ENCODE measurements at regions of chr18 and their contacts with region 1.

Region 1: DNA sequence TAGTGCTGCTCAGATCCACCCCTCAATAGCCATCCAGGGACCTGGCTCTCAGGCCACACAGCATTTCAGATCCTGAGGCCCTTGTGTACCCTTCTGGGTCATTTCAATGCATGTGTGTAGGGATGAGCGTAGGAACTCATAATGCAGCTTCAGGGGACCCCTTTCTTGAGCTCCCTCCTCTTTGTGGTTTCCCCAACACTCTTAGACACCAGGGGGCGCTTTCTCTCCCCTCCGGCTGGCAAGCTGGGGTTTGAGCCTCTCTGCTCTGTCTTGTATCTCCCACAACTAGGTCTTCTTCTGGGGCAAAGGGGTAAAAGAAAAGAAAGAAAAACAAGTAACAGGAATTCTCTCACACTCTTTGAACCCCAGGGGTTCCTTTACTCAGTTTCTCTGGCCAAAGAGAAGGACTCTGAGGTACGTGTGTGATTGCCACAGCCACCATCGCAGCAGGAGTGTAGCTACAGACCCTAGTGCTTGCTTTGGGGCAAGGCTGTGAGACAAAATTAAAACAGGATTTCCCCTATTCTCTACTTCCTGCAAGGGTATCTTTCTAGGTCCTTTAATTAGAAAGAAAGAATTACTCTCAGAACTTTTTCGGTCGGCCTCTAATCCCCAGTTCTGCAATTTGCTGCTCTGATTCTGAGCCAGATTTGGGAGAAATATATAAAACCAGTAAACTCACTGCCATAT is 38.0 kb downstream of the CABYR start:
- DNase-seq: peak; percentile 12 to 33 (median 23)
- H3K4me3 ChIP-seq: no peak overlapping the region
- H3K4me3 Mint-ChIP-seq: no peak overlapping the region
- H3K27ac ChIP-seq: no peak overlapping the region
- H3K27ac Mint-ChIP-seq: peak overlapping the region in 1 of 7 donors; percentile 54
- H3K4me1 ChIP-seq: no peaks in the 10 kb centered on the region
- H3K4me1 Mint-ChIP-seq: peaks cover 6% of the 10 kb centered on the region
- H3K27me3 ChIP-seq: no peaks in the 10 kb centered on the region
- H3K27me3 Mint-ChIP-seq: no peaks in the 10 kb centered on the region
- CTCF ChIP-seq: peak; percentile 82

Region 2: DNA sequence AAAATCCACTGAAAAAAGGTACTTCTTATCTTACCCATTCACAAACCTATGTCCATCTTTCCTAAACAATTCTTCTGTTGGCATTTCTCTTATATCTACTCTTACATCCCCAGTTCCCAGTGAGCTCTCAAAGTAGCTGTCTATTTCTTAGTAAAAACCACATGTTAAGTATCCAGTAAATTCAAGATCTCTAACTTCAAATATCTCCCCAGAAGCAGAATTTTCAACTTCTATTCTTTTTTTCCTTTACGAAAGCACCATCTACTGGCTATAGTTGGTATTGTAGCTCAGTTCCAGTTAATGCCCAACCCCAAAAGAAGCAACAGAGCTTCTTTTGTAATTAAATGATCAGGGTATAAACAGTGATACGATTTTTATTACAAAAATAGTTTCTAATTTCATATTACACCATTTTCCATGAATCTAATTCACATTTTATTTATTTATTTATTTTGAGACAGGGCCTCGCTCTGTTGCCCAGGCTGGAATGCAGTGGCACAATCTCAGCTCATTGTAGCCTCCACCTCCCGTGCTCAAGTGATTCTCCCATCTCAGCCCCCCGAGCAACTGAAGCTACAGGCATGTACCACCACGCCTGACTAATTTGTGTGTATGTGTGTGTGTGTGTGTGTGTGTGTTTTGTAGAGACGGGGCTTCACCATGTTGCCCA is 312.1 kb after region 1 on chr18:
- intact Hi-C with region 1: loop called (anchors 5 to 10 kb)
- DNase-seq: peak in 2 of 3 donors; percentile 25 to 46
- H3K4me3 ChIP-seq: no peak overlapping the region
- H3K4me3 Mint-ChIP-seq: no peak overlapping the region
- H3K27ac ChIP-seq: no peak overlapping the region
- H3K27ac Mint-ChIP-seq: no peak overlapping the region
- H3K4me1 ChIP-seq: no peaks in the 10 kb centered on the region
- H3K4me1 Mint-ChIP-seq: peaks cover 21% of the 10 kb centered on the region
- H3K27me3 ChIP-seq: no peaks in the 10 kb centered on the region
- H3K27me3 Mint-ChIP-seq: peaks cover 0 to 6% (median 0%) of the 10 kb centered on the region in 3 donors
- CTCF ChIP-seq: peak; percentile 89

Measured in CD14-positive monocyte (primary cell).